Activated CD8-positive, alpha-beta T cell treated with anti-CD3 and anti-CD28 coated beads, Interleukin-2, amount 10 ng/mL, durations not matched to agents 7 days and 5 days (primary cell): ENCODE measurements at regions of chr11 and their contacts with region 1.

Region 1: DNA sequence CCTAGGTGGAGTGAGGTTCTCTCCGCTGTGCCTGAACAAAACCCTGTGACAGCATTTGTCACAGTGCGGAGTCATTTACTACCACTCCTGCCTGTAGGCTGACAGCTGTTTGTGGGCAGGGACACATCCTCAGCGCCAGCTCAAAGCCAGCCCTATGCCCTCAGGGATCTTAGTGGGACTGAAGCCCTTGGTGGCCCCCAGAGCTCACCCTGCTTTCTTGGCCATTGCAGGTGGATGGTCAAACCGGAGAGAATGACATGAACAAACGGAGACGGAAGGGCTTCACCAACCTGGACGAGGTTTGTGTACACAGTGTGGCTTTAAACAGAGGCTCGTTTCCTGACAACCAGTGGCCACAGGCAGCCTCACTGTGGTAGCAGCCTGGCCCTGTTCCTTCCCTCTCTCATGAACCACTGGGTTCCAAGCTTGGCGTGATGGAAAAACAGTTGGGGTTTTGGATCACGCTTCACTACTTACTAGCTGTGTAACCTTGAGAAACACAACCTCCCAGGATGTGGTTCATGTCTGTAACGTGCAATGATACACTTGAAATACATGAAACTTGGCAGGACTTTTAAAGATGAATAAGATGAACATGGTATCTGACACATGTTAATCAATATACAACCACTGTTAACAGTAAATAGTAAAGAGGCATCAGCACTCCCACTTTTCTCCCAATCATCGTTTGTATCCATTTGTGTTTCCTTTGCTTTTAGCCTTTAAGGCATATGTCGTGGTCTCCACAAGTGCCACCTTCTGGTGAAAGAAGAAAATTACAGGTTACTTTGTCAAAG is 125.8 kb downstream of the MICAL2 start:
- DNase-seq: peak; percentile 81
- ATAC-seq: peak; percentile 85
- H3K4me3 Mint-ChIP-seq: peak overlapping the region; percentile 32
- H3K27ac Mint-ChIP-seq: peak overlapping the region; percentile 89
- H3K4me1 Mint-ChIP-seq: peaks cover 34% of the 10 kb centered on the region
- H3K27me3 Mint-ChIP-seq: no peaks in the 10 kb centered on the region

Region 2: DNA sequence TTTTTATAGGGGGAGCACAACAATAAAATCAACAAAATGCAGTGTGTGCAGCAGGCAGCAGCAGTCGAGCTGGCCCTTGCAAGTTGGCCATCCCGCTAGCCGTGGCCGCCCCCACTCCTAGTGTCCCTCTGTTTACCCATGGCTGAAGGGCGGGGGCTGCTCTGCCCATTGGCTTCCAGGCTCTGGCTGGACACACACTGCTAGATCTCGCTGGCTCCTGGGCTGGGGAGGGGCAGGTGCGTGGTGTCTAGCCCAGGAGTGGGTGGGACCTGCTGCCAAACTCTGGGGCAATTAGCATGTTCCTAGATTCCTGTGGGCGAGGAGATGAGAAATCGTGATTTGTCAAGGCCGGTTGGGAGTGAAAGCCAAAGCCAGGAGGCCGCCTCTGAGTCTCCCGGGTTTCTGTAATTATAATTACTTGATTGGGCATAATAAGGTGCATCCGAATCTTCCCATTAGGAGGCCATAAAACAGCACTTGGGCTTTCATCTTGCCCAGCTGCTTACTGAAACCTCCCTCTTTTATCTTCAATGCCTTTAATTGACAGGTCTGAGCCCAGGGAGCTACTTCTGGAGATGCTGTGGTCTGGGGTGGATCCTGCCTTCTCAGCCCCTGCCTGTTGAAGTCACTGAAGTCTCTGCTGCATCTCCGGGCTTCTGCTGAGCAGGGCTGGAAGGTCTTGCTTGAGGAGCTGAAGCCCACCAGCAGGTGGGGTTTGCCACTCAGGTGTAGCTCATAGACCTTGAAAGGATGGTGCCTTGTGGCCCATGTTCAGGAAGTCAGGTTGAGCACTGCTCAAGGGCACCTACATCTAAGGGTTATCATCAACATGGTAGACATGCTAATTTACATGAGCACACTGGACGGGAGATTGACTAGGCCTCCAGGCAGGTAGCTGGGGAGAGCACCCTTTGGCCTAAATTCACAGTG is 183.2 kb before region 1 on chr11:
- CTCF ChIA-PET with region 1: interaction called, 43 read pairs
- POLR2A ChIA-PET with region 1: interaction called, 3 read pairs
- DNase-seq: peak; percentile 52
- ATAC-seq: peak; percentile 68
- H3K4me3 Mint-ChIP-seq: no peak overlapping the region
- H3K27ac Mint-ChIP-seq: peak overlapping the region; percentile 54
- H3K4me1 Mint-ChIP-seq: peaks cover 6% of the 10 kb centered on the region
- H3K27me3 Mint-ChIP-seq: no peaks in the 10 kb centered on the region

Region 3: GRCh38 chr11:12122083-12122482 is 114.1 kb before region 1 on chr11:
- CTCF ChIA-PET with region 1: interaction called, 17 read pairs
- POLR2A ChIA-PET with region 1: no interaction called
- DNase-seq: no peak
- ATAC-seq: peak; percentile 40
- H3K4me3 Mint-ChIP-seq: no peak overlapping the region
- H3K27ac Mint-ChIP-seq: no peak overlapping the region
- H3K4me1 Mint-ChIP-seq: peaks cover 64% of the 10 kb centered on the region
- H3K27me3 Mint-ChIP-seq: no peaks in the 10 kb centered on the region

Region 4: GRCh38 chr11:12159351-12160099 is 76.6 kb before region 1 on chr11:
- CTCF ChIA-PET with region 1: interaction called, 22 read pairs
- POLR2A ChIA-PET with region 1: interaction called, 3 read pairs
- DNase-seq: no peak
- ATAC-seq: no peak
- H3K4me3 Mint-ChIP-seq: no peak overlapping the region
- H3K27ac Mint-ChIP-seq: no peak overlapping the region
- H3K4me1 Mint-ChIP-seq: peaks cover 62% of the 10 kb centered on the region
- H3K27me3 Mint-ChIP-seq: no peaks in the 10 kb centered on the region

Region 5: GRCh38 chr11:12189543-12190235 is 46.5 kb before region 1 on chr11:
- CTCF ChIA-PET with region 1: interaction called, 13 read pairs
- POLR2A ChIA-PET with region 1: interaction called, 8 read pairs
- DNase-seq: no peak
- ATAC-seq: peak; percentile 62
- H3K4me3 Mint-ChIP-seq: no peak overlapping the region
- H3K27ac Mint-ChIP-seq: peak overlapping the region; percentile 23
- H3K4me1 Mint-ChIP-seq: peaks cover 45% of the 10 kb centered on the region
- H3K27me3 Mint-ChIP-seq: no peaks in the 10 kb centered on the region

Region 6: DNA sequence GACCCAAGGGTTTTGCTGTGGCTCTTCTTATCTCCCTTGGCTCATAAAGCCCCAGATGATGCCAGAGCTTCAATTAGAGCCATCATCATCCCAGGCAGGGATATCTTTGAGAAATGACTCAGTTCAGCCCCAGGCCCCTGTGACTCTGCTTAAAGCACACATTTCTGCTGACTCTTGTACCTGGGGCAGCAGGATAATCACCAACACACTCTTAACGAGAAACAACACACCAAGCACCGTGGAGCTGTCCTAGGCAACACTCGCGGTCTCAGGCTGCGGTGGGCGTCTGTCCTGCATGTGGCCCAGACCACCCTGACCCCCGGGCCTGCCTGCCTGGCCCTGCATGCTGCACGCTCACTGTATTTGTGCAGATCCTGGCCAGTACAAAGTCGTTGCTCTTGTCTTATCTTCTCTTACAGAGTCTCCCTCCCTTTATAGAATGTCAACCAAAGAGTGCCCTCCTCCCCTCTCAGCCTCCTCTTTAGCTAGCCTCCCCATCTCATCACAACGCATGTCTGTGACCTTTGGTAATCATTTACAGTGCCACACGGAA is 27.1 kb after region 1 on chr11:
- CTCF ChIA-PET with region 1: interaction called, 10 read pairs
- POLR2A ChIA-PET with region 1: no interaction called
- DNase-seq: no peak
- ATAC-seq: no peak
- H3K4me3 Mint-ChIP-seq: no peak overlapping the region
- H3K27ac Mint-ChIP-seq: no peak overlapping the region
- H3K4me1 Mint-ChIP-seq: no peaks in the 10 kb centered on the region
- H3K27me3 Mint-ChIP-seq: no peaks in the 10 kb centered on the region

Region 7: DNA sequence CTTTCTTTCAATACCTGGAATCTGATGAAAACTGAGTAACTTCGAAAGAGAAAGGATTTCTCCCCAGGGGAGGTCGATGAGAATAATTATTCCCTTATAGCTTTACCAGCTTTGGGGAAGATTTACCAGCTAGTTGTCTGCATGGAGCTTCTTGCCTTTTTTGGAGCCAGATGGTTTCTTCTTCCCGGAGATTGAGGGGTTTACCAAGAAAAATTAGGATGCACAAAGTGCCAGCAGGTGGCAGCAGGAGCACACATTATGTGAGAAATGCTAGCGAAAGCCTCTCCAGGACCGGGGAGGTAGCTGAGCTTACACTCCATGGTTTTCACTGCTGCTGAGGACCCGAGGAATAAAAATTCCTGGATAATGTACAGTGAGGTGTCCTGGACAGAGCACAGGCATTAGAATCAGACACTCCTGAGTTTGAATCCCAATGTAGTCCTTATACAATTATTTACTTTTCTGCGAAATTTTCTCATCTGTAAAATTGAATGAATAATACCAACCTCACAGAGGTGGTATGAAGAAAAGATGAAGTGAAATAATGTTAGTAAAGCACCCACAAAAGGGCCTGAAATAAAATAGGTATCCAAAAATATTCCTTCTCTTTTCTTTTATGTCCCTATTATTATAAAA is 95.2 kb after region 1 on chr11:
- CTCF ChIA-PET with region 1: no interaction called
- POLR2A ChIA-PET with region 1: no interaction called
- DNase-seq: peak; percentile 79
- ATAC-seq: peak; percentile 61
- H3K4me3 Mint-ChIP-seq: no peak overlapping the region
- H3K27ac Mint-ChIP-seq: no peak overlapping the region
- H3K4me1 Mint-ChIP-seq: peaks cover 3% of the 10 kb centered on the region
- H3K27me3 Mint-ChIP-seq: peaks cover 2% of the 10 kb centered on the region

Region 8: DNA sequence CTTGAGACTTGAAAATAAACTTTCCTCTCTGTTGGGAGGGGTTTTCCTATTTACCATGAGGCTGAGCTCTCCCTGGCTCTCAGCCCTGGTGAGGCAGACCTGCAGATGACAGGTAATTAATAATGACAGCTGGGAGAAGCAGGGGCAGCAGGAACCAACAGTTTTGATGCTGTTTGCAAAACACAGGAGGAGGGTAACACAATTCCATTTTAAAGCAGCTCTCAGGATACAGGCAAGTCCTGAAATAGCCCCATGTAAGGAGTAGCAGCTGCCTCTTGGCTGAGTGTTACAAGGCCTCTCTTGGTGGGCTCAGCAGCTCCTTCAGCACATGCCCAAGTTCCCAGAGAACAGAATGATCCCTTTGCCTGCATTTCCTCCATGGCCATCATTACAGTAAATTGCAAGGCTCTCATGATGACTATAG is 154.6 kb after region 1 on chr11:
- CTCF ChIA-PET with region 1: no interaction called
- POLR2A ChIA-PET with region 1: no interaction called
- DNase-seq: no peak
- ATAC-seq: no peak
- H3K4me3 Mint-ChIP-seq: no peak overlapping the region
- H3K27ac Mint-ChIP-seq: no peak overlapping the region
- H3K4me1 Mint-ChIP-seq: no peaks in the 10 kb centered on the region
- H3K27me3 Mint-ChIP-seq: peaks cover 5% of the 10 kb centered on the region